ENCODE measurements at regions of chr1 and their contacts with region 1.

Region 1: DNA sequence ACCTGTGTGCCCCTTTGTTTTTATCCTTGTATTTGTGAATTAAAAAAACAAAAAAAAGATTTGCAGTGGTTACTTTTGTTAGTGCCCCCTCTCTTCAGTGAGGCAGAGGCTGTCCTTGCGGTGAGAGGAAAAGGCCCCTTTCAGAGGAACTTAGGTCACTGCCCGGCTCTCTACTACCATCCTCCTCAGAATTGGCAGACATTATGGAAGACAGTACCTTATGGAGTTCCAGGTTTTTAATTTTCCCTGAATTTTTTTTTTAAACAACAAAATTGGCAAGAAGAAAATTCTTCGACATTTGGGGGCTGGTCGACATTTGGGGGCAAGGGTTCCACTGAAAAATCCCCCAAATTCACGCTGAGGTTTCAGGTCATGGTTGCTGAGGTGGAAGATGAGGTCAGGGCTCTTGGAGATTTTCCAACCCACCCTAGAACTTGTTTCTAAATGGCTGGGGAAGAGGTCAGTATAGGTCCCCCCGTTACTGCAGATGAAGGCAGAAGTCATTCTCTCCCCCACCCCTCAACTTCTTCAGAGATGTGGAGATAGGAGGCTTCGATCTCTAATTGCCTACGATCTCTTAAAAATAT is 5.3 kb downstream of the RXFP4 start:
- DNase-seq: peak in 2 of 9 experiments; percentile 30 to 49
- ATAC-seq: no peak
- H3K4me3 ChIP-seq: no peak overlapping the region
- H3K4me3 Mint-ChIP-seq: no peak overlapping the region
- H3K27ac ChIP-seq: peak overlapping the region; percentile 44 to 81
- H3K27ac Mint-ChIP-seq: peak overlapping the region; percentile 95
- H3K4me1 ChIP-seq: peaks cover 31% of the 10 kb centered on the region
- H3K4me1 Mint-ChIP-seq: peaks cover 39% of the 10 kb centered on the region
- H3K27me3 ChIP-seq: no peaks in the 10 kb centered on the region
- H3K27me3 Mint-ChIP-seq: no peaks in the 10 kb centered on the region
- CTCF ChIP-seq: no peak

Region 2: GRCh38 chr1:155978325-155978972 is 31.7 kb after region 1 on chr1 and contains the start of gene ARHGEF2:
- CTCF ChIA-PET with region 1: interaction called, 4 read pairs
- POLR2A ChIA-PET with region 1: interaction called, 11 read pairs
- intact Hi-C with region 1: no loop called
- DNase-seq: peak; percentile 46 to 88 (median 79)
- ATAC-seq: peak; percentile 66
- H3K4me3 ChIP-seq: peak within 1 kb of the TSS; percentile 70 to 100
- H3K4me3 Mint-ChIP-seq: peak within 1 kb of the TSS; percentile 97
- H3K27ac ChIP-seq: peak within 1 kb of the TSS; percentile 59 to 91
- H3K27ac Mint-ChIP-seq: peak within 1 kb of the TSS; percentile 94
- H3K4me1 ChIP-seq: peaks cover 72% of the 10 kb centered on the region
- H3K4me1 Mint-ChIP-seq: peaks cover 69% of the 10 kb centered on the region
- H3K27me3 ChIP-seq: no peaks in the 10 kb centered on the region
- H3K27me3 Mint-ChIP-seq: no peaks in the 10 kb centered on the region
- CTCF ChIP-seq: no peak
- total RNA-seq, gene ARHGEF2: 51.6 to 52.3 TPM

Region 3: DNA sequence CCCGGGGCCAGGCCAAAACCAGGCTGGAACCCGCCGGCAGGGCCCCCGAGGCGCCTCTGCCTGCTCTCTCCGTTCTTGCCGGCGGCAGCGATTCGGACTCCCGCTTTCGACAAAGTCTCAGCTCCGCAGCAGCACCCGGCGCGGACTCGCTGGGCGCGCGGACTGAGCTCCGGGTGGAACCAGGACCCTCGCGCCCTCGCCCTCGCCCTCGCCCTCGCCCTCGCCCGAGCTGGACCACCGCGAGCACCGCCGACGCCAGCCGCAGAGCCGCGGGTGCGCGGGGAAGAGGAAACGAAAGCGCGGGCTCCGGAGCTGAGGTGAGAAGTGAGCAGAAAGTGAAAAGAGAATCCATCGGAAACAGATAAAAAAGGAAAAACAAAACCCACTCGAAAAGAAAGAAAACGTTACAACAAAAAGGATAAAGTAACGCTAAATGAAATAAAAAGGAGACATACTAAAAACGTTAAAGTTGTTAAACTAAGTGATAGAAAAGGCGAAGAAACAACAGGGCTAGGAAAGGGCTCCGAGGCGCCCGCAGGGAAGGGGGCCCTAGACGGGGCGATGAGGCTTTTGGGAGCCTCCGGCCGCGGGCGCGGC is 488.9 kb after region 1 on chr1:
- CTCF ChIA-PET with region 1: no interaction called
- POLR2A ChIA-PET with region 1: no interaction called
- intact Hi-C with region 1: no loop called
- DNase-seq: peak in 3 of 9 experiments; percentile 24 to 51 (median 33)
- ATAC-seq: peak; percentile 27
- H3K4me3 ChIP-seq: peak overlapping the region; percentile 31 to 34
- H3K4me3 Mint-ChIP-seq: peak overlapping the region; percentile 82
- H3K27ac ChIP-seq: no peak overlapping the region
- H3K27ac Mint-ChIP-seq: no peak overlapping the region
- H3K4me1 ChIP-seq: peaks cover 33% of the 10 kb centered on the region
- H3K4me1 Mint-ChIP-seq: peaks cover 29% of the 10 kb centered on the region
- H3K27me3 ChIP-seq: peaks cover 62 to 75% of the 10 kb centered on the region in 2 experiments
- H3K27me3 Mint-ChIP-seq: peaks cover 79% of the 10 kb centered on the region
- CTCF ChIP-seq: no peak